Activated CD4-positive, alpha-beta memory T cell treated with anti-CD3 and anti-CD28 coated beads for 36 hours (primary cell): ENCODE measurements at regions of chr15 and their contacts with region 1.

Region 1: GRCh38 chr15:40593588-40594428 is at the start of gene KNL1:
- DNase-seq: peak; percentile 95
- H3K4me3 Mint-ChIP-seq: peak within 1 kb of the TSS; percentile 98
- H3K27ac Mint-ChIP-seq: peak within 1 kb of the TSS; percentile 99
- H3K4me1 Mint-ChIP-seq: peaks cover 26% of the 10 kb centered on the region
- H3K27me3 Mint-ChIP-seq: peaks cover 10% of the 10 kb centered on the region
- total RNA-seq, gene KNL1: 32.8 to 33.1 TPM

Region 2: DNA sequence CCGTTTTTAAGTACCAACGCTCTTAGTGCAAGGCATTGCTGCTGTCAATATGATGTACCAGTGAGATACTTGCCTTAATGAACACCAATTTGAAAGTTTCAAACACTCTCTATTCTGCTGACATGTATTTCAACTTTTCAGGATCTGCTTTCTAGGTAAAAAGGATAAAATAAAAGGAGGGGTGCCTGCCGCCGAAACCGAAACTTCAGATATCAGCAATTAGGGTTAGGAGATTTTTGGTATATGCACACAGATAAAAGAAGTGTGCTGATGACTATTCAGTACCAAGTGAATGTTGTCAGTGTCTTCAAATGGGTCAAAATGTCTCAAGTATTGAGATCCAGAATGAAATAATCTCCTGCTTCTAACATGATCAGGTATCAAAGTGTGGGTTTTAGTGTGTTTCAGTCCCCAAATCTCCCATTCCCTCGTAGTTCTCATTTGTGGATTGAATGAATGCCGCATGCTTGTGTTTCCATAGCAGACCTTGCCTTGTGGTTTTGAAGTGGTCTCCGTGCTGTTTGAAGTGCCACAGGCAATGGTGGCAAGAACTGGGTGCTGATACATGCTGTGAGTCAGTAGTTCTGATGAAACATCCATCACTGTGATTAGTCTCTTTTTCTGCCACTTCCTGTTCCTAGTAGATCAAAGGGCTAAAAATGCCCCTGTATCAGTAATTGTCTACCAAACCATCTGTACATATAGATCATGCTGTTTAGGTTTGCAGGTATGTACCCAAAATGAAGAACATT is 100.5 kb before region 1 on chr15:
- CTCF ChIA-PET with region 1: no interaction called
- POLR2A ChIA-PET with region 1: no interaction called
- intact Hi-C with region 1: loop called (anchors 1 kb)
- DNase-seq: peak; percentile 85
- H3K4me3 Mint-ChIP-seq: peak overlapping the region; percentile 4
- H3K27ac Mint-ChIP-seq: peak overlapping the region; percentile 74
- H3K4me1 Mint-ChIP-seq: peaks cover 27% of the 10 kb centered on the region
- H3K27me3 Mint-ChIP-seq: peaks cover 1% of the 10 kb centered on the region

Region 3: GRCh38 chr15:40564591-40565332 is 29.0 kb before region 1 on chr15 and contains the start of gene CCDC32:
- CTCF ChIA-PET with region 1: interaction called, 16 read pairs
- POLR2A ChIA-PET with region 1: interaction called, 11 read pairs
- intact Hi-C with region 1: loop called (anchors 1 kb)
- DNase-seq: peak; percentile 98
- H3K4me3 Mint-ChIP-seq: peak within 1 kb of the TSS; percentile 96
- H3K27ac Mint-ChIP-seq: peak within 1 kb of the TSS; percentile 92
- H3K4me1 Mint-ChIP-seq: peaks cover 48% of the 10 kb centered on the region
- H3K27me3 Mint-ChIP-seq: peaks cover 2% of the 10 kb centered on the region
- total RNA-seq, gene CCDC32: 28.6 to 29.2 TPM

Region 4: DNA sequence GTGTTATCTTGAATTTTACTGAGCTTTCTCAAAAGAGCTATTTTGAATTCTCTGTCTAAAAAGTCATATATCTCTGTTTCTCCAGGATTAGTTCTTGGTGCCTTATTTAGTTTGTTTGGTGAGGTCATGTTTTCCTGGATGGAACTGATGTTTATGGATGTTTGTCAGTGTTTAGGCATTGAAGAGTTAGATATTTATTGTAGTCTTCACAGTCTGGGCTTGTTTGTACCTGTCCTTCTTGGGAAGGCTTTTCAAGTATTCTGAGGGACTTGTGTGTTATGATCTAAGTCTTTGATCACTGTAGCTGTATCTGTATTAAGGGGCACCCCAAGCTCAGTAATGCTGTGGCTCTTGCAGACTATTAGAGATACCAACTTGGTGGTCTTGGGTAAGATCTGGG is 90.6 kb after region 1 on chr15:
- CTCF ChIA-PET with region 1: interaction called, 4 read pairs
- POLR2A ChIA-PET with region 1: no interaction called
- intact Hi-C with region 1: loop called (anchors 1 kb)
- DNase-seq: no peak
- H3K4me3 Mint-ChIP-seq: no peak overlapping the region
- H3K27ac Mint-ChIP-seq: no peak overlapping the region
- H3K4me1 Mint-ChIP-seq: no peaks in the 10 kb centered on the region
- H3K27me3 Mint-ChIP-seq: no peaks in the 10 kb centered on the region

Region 5: DNA sequence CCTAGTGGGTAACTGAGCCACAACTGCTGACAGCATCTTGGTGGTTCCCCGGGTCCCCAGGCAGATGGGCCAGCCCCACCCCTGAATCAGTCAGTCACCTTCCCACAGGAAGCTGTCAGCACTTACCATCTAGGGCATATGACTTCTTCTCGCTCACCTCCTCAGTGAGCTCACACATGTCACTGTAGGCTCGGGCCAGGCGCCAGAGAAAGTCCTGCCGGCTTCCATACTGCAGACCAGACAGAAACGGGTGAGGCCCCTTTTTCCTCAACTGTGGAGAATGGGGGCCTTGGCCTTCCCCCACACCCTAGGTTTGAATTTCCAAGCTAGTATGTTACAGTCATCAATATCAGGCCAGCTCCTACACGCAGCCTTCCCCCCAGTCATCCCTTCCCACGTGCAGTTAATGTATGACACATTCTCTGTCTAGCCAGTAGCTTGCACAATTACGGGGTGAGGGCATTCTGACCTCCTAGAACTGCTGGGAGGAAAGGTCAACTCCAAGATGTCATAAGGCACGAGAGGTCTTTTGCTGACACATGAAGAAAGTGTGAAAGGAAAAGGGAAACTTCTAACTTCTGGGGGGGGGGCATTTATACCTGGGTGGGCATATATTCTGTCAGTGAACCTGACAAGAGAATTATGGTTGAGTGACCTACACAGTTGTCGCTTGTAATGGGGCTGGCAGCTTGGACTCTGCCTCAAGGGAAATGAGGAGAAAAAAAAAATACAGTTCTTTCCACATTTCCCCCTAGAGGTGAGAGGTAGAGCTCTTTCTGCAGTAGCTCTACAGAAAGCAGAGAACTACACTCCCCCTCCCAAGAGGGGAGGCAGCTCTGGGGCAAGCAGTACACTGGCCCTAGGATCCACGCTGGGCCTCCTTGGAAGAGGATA is 150.4 kb after region 1 on chr15:
- CTCF ChIA-PET with region 1: interaction called, 3 read pairs
- POLR2A ChIA-PET with region 1: no interaction called
- intact Hi-C with region 1: loop called (anchors 2 kb)
- DNase-seq: peak; percentile 86
- H3K4me3 Mint-ChIP-seq: peak overlapping the region; percentile 49
- H3K27ac Mint-ChIP-seq: peak overlapping the region; percentile 89
- H3K4me1 Mint-ChIP-seq: peaks cover 29% of the 10 kb centered on the region
- H3K27me3 Mint-ChIP-seq: no peaks in the 10 kb centered on the region

Region 6: GRCh38 chr15:40754883-40755811 is 161.3 kb after region 1 on chr15 and contains the start of gene RMDN3:
- CTCF ChIA-PET with region 1: no interaction called
- POLR2A ChIA-PET with region 1: no interaction called
- intact Hi-C with region 1: loop called (anchors 2 kb)
- DNase-seq: peak; percentile 96
- H3K4me3 Mint-ChIP-seq: peak within 1 kb of the TSS; percentile 90
- H3K27ac Mint-ChIP-seq: peak within 1 kb of the TSS; percentile 94
- H3K4me1 Mint-ChIP-seq: peaks cover 28% of the 10 kb centered on the region
- H3K27me3 Mint-ChIP-seq: no peaks in the 10 kb centered on the region
- total RNA-seq, gene RMDN3: 22.6 to 22.7 TPM